ENCODE measurements at regions of chr9 and their contacts with region 1.

Region 1: DNA sequence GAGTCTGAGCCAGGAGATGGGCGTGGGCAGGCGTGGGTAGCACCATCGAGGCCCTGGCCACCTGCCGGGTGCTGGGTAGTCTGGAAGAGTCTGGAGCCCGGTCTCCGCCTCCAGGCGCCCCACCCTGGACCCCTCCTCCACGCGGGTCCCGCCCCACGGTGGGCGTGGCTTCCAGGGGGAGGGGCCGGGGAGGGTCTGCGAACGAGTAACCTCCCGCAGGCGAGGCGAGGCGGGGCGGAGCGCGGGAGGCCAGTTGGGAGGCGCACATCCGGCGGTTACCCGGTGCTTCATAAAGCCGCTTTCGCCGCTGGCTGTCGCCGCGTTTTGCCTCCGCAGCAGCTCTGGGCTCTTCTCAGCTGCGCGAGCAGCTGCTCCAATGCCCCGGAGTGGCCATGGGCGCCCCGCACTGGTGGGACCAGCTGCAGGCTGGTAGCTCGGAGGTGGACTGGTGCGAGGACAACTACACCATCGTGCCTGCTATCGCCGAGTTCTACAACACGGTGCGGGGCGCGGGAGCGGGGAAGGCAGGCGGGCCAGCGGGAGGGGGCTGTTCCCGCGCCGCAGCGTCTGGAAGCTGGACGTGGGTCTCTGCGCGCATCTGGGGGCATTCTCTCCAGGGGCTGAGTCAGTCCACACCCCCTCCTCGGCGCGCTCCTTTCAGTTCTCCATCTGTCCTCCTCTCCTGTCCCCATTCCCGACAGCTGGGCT is at the start of gene ACER2:
- DNase-seq: peak; percentile 79 to 97
- H3K4me3 ChIP-seq: peak within 1 kb of the TSS; percentile 92 to 94
- H3K27ac ChIP-seq: peak within 1 kb of the TSS; percentile 88 to 89
- H3K4me1 ChIP-seq: peaks cover 0 to 12% of the 10 kb centered on the region in 2 donors
- H3K27me3 ChIP-seq: no peaks in the 10 kb centered on the region
- CTCF ChIP-seq: peak in 2 of 3 experiments; percentile 4 to 18
- total RNA-seq, gene ACER2: 1.4 TPM

Region 2: GRCh38 chr9:19184144-19184917 is 224.5 kb before region 1 on chr9:
- intact Hi-C with region 1: loop called (anchors 1 kb)
- DNase-seq: peak; percentile 90 to 96
- H3K4me3 ChIP-seq: peak overlapping the region in 1 of 2 donors; percentile 10
- H3K27ac ChIP-seq: peak overlapping the region; percentile 93 to 96
- H3K4me1 ChIP-seq: peaks cover 10 to 18% of the 10 kb centered on the region in 2 donors
- H3K27me3 ChIP-seq: no peaks in the 10 kb centered on the region
- CTCF ChIP-seq: no peak

Region 3: GRCh38 chr9:19431361-19432171 is 22.7 kb after region 1 on chr9:
- intact Hi-C with region 1: loop called (anchors 1 kb)
- DNase-seq: peak; percentile 16 to 91
- H3K4me3 ChIP-seq: no peak overlapping the region
- H3K27ac ChIP-seq: peak overlapping the region; percentile 79 to 85
- H3K4me1 ChIP-seq: peaks cover 0 to 22% of the 10 kb centered on the region in 2 donors
- H3K27me3 ChIP-seq: no peaks in the 10 kb centered on the region
- CTCF ChIP-seq: no peak

Region 4: DNA sequence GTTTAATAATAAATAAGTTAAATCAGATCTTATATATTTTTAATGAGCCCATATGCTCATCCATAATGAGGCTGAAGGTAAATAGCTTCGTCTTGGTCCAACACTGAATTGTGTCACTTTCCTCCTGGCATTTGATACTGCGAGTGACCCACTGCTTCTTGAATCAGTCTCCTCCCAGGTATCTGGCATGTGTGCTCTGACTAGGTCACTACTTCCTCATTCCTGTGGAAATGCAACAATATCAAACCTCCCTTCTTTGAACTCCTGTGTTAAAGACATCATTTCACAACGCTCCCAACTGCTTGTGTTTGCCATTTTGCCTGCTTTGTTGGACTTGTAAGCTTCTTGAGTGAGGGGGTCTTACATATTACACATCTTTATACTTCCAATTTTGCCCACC is 222.3 kb after region 1 on chr9:
- intact Hi-C with region 1: no loop called
- DNase-seq: no peak
- H3K4me3 ChIP-seq: no peak overlapping the region
- H3K27ac ChIP-seq: no peak overlapping the region
- H3K4me1 ChIP-seq: no peaks in the 10 kb centered on the region
- H3K27me3 ChIP-seq: no peaks in the 10 kb centered on the region
- CTCF ChIP-seq: no peak